HCT116 (cell line): ENCODE measurements at regions of chr14 and their contacts with region 1.

Region 1: DNA sequence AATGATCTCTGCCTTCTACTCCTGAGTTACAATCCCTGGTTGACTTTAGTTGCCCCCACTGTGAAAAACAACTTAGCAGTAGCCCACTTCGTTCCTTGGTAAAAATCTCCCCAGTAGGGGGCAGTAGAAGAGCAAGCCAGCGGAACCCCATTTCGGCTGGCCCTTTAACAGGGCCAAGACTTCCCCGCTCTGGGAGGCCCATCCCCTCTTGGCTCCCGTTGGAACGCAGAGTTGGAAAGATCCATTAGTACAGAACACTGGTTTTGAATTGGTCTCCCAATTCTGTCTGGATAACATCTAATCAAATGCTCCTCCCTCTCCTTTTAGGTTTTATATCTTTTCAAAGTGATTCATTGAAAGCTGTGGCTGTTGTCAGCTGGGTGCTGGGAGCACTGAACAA is 1133.3 kb downstream of the BCL11B start:
- DNase-seq: peak; percentile 1
- ATAC-seq: peak; percentile 55; the same call in 1 of the 2 replicates
- H3K4me3 ChIP-seq: no peak overlapping the region
- H3K27ac ChIP-seq: no peak overlapping the region
- H3K4me1 ChIP-seq: no peaks in the 10 kb centered on the region
- H3K27me3 ChIP-seq: no peaks in the 10 kb centered on the region
- CTCF ChIP-seq: peak in 2 of 3 experiments; percentile 41 to 62; a peak in 4 of 6 replicates
- POLR2A ChIP-seq: no peak
- RAD21 ChIP-seq: peak; percentile 38; the same call in 1 of the 2 replicates

Region 2: GRCh38 chr14:98312006-98312405 is 173.3 kb after region 1 on chr14:
- CTCF ChIA-PET with region 1: no interaction called
- POLR2A ChIA-PET with region 1: no interaction called
- RAD21 ChIA-PET with region 1: no interaction called
- intact Hi-C with region 1: no loop called
- DNase-seq: no peak
- ATAC-seq: no peak
- H3K4me3 ChIP-seq: no peak overlapping the region
- H3K27ac ChIP-seq: no peak overlapping the region
- H3K4me1 ChIP-seq: no peaks in the 10 kb centered on the region
- H3K27me3 ChIP-seq: no peaks in the 10 kb centered on the region
- CTCF ChIP-seq: no peak
- POLR2A ChIP-seq: no peak
- RAD21 ChIP-seq: no peak

Region 3: GRCh38 chr14:98573082-98573481 is 434.4 kb after region 1 on chr14:
- CTCF ChIA-PET with region 1: no interaction called
- POLR2A ChIA-PET with region 1: no interaction called
- RAD21 ChIA-PET with region 1: no interaction called
- intact Hi-C with region 1: no loop called
- DNase-seq: no peak
- ATAC-seq: no peak
- H3K4me3 ChIP-seq: no peak overlapping the region
- H3K27ac ChIP-seq: no peak overlapping the region
- H3K4me1 ChIP-seq: no peaks in the 10 kb centered on the region
- H3K27me3 ChIP-seq: no peaks in the 10 kb centered on the region
- CTCF ChIP-seq: no peak
- POLR2A ChIP-seq: no peak
- RAD21 ChIP-seq: no peak

Region 4: DNA sequence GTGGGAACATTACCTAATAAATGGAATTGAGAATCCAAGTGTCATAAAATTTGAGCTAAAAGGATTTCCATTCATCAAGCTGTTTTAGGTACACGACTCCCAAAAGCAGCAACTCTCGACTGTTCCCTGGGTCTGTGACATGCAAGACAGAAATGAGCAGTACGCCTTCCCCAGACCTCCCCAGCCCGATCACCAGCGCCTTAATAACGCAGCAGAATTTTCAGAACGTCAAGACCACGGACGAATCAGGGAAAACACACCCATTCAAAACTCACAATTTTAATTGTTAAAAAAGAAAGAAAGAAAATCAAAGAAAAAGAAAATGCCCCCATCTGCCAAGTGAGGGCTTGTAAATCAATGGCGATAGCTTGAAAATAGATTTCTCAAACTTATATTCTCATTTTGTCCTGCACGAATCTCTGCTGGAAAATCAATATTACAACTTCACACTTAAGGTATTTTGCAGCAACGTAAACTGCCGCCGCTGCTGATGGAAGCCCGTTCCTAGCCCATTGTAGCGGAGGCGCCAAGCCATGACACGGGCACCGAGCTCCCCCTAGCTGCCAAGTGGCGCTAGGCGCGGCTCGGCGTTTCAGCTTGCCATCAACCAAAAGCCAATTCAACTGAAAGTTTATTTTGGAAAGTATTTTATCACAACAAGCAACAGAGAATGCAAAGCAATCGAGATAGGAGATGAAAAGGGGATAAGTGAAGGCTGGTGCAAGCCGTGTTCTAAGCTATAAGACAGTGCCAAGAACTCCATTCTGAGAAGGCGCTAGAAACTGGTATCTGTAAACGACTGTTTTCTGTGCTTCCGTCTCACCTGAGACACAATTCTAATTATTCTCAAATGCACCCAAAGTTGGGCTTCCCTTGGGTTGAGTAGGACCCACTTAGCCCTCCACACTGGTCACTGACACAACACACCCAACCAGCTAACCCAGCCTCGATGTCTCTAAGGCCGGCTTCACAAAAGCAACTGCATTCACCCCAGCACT is 1127.8 kb after region 1 on chr14:
- CTCF ChIA-PET with region 1: no interaction called
- POLR2A ChIA-PET with region 1: no interaction called
- RAD21 ChIA-PET with region 1: no interaction called
- intact Hi-C with region 1: loop called (anchors 1 kb)
- DNase-seq: peak; percentile 45
- ATAC-seq: peak; percentile 96
- H3K4me3 ChIP-seq: no peak overlapping the region; a peak in 1 of 4 replicates
- H3K27ac ChIP-seq: no peak overlapping the region
- H3K4me1 ChIP-seq: peaks cover 4 to 9% of the 10 kb centered on the region in 2 experiments; a peak in 3 of 4 replicates
- H3K27me3 ChIP-seq: peaks cover 2% of the 10 kb centered on the region; the same call in 1 of the 2 replicates
- CTCF ChIP-seq: peak; percentile 73 to 99 (median 97); a peak in 5 of 6 replicates
- POLR2A ChIP-seq: no peak
- RAD21 ChIP-seq: peak; percentile 98

Region 5: GRCh38 chr14:99415496-99416281 is 1277.0 kb after region 1 on chr14:
- CTCF ChIA-PET with region 1: no interaction called
- POLR2A ChIA-PET with region 1: no interaction called
- RAD21 ChIA-PET with region 1: no interaction called
- intact Hi-C with region 1: loop called (anchors 5 kb)
- DNase-seq: peak; percentile 69
- ATAC-seq: peak; percentile 96
- H3K4me3 ChIP-seq: no peak overlapping the region
- H3K27ac ChIP-seq: no peak overlapping the region
- H3K4me1 ChIP-seq: 0 out of 4 replicates have a peak, but pooled peaks cover 0 to 4% of the 10 kb centered on the region in 2 experiments
- H3K27me3 ChIP-seq: no peaks in the 10 kb centered on the region
- CTCF ChIP-seq: peak; percentile 71 to 89 (median 71); a peak in 5 of 6 replicates
- POLR2A ChIP-seq: no peak
- RAD21 ChIP-seq: peak; percentile 85